ENCODE measurements at regions of chr14 and their contacts with region 1.

Region 1: DNA sequence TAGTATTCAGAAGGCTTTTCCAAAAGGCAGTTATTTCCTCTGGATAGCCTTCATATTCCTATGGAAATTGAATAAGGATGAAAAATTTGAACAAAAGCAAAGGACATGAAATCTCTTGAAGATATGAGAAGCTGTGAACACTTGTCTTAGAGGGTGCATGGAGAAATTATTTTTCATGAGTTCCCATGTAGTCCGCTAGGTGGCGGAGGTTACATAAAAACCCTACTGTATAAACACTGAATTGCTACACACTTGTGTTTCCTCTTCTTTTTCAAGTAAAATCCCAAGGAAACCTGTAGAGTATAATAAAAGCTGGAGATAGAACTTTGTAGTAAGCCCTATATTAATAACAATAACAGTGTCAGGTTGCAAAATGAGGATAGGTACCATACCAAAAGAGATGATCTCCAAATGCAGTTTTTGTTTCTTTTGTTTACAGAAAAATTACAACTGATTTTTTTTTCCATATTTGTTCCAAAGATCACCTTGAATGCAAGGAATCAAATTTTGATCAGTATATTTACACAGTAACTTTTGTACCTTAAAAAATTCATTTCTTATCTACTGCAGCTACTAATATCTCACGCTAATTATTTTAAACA is 37.8 kb upstream of the OR4E1 start:
- DNase-seq: peak; percentile 2 to 37
- H3K4me3 ChIP-seq: no peak overlapping the region
- H3K27ac ChIP-seq: no peak overlapping the region
- H3K4me1 ChIP-seq: no peaks in the 10 kb centered on the region
- H3K27me3 ChIP-seq: no peaks in the 10 kb centered on the region
- CTCF ChIP-seq: peak; percentile 81

Region 2: DNA sequence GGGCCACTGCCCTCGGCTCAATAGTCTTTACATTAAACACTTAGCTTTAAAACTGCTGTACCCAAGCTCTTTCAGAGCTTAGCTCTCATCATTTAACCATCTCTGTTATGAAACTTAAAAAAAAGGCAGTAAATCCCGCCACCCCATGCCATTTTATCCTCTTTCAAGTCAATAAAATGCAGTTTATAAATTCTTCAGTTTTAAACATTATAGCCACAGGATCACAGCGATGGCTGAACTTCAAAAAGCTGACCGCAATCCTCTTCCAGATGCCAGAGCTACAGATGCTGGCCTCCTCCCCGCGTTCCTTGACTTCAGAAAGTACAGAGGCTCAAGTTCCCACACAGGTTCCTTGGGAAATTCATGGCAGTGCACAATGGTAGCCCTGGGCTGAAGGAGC is 135.8 kb before region 1 on chr14:
- CTCF ChIA-PET with region 1: interaction called, 10 read pairs
- POLR2A ChIA-PET with region 1: no interaction called
- intact Hi-C with region 1: no loop called
- DNase-seq: no peak
- H3K4me3 ChIP-seq: no peak overlapping the region
- H3K27ac ChIP-seq: no peak overlapping the region
- H3K4me1 ChIP-seq: no peaks in the 10 kb centered on the region
- H3K27me3 ChIP-seq: no peaks in the 10 kb centered on the region; the same call in none of the 2 replicates
- CTCF ChIP-seq: no peak

Region 3: DNA sequence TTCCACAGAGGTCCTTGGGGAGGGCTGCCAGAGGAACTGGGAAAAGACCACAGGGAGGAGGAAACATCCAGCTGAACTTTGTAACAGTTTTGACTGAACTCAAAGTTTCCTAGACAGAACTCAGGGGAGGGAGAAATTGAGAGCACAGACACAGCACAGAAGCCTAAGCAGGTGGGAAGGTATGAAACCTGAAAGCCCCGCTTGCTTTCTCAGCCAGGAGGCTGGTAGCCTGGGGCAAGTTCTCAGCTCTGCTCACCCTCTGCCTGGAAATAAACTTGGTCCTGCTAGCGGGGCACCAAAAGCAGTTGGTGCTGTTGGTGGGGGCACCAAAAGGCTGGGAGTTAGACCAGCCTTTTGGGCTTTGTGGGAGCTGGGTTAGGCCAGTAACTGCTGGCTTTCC is 11.9 kb before region 1 on chr14:
- CTCF ChIA-PET with region 1: no interaction called
- POLR2A ChIA-PET with region 1: no interaction called
- intact Hi-C with region 1: no loop called
- DNase-seq: no peak
- H3K4me3 ChIP-seq: no peak overlapping the region
- H3K27ac ChIP-seq: no peak overlapping the region
- H3K4me1 ChIP-seq: no peaks in the 10 kb centered on the region
- H3K27me3 ChIP-seq: no peaks in the 10 kb centered on the region
- CTCF ChIP-seq: no peak